Activated CD4-positive, alpha-beta T cell treated with anti-CD3 and anti-CD28 coated beads for 36 hours (primary cell): ENCODE measurements at regions of chr1 and their contacts with region 1.

Region 1: DNA sequence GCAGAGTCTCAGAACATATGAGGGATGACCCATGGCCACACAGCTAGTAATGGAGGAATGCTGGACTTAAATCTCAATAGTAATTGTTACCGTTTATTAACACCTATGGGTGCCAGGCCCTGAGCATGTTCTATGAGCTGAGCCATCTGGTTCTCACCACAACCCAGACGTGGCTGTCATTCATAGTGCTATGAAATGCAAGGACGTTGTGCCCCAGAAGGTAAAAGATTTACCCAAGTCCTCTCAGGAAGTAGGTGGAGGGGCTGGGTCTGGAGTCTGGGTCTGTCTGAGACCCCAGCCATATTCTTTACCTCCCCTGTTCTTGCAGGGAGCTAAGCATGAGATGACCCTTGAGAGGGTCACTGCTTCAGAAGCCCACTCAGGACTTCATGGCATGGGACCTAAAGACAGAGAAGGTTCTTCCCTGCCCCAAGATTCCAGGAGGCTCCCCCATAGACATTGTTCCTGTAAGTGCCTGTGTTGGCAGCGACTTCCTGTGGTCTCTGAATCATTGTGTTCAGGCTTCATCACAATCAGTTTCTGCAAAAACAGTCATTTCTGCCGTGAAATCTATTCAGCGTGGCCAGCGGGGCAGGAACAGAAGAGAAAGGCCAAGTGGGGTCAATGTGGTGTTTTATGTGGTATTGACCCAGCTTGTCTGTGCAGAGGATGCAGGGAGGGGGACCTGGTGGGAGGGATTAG is 475.4 kb downstream of the PTPRU start:
- DNase-seq: peak; percentile 77
- ATAC-seq: peak; percentile 74
- H3K4me3 Mint-ChIP-seq: no peak overlapping the region
- H3K27ac Mint-ChIP-seq: peak overlapping the region; percentile 21
- H3K4me1 Mint-ChIP-seq: peaks cover 38% of the 10 kb centered on the region
- H3K27me3 Mint-ChIP-seq: peaks cover 23% of the 10 kb centered on the region

Region 2: GRCh38 chr1:29688471-29689365 is 23.0 kb before region 1 on chr1:
- CTCF ChIA-PET with region 1: no interaction called
- POLR2A ChIA-PET with region 1: no interaction called
- intact Hi-C with region 1: loop called in 1 of 2 experiments (anchors 1 kb)
- DNase-seq: peak; percentile 70
- ATAC-seq: peak; percentile 96
- H3K4me3 Mint-ChIP-seq: no peak overlapping the region
- H3K27ac Mint-ChIP-seq: peak overlapping the region; percentile 35
- H3K4me1 Mint-ChIP-seq: peaks cover 14% of the 10 kb centered on the region
- H3K27me3 Mint-ChIP-seq: peaks cover 26% of the 10 kb centered on the region

Region 3: DNA sequence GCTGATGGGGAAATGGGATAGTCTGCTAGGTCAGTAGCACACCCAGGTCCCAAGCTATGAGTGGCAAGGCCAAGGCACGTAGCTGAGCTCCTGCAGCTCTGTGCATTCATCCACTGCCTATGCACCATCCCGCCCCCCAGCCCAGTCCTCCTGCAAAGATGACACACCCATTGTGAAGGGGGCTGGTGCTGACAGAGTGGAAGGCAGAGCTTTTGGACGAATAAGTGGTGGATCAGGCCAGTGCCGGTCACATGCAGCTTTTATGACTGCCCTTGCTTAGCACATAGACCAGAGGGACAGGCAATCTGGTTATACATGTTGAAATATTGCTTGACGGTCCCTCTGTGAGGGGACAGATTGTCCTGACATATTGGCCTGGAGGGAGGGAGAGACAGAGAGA is 18.9 kb after region 1 on chr1:
- CTCF ChIA-PET with region 1: no interaction called
- POLR2A ChIA-PET with region 1: no interaction called
- intact Hi-C with region 1: no loop called
- DNase-seq: no peak
- ATAC-seq: no peak
- H3K4me3 Mint-ChIP-seq: no peak overlapping the region
- H3K27ac Mint-ChIP-seq: no peak overlapping the region
- H3K4me1 Mint-ChIP-seq: peaks cover 2% of the 10 kb centered on the region
- H3K27me3 Mint-ChIP-seq: peaks cover 14% of the 10 kb centered on the region

Region 4: DNA sequence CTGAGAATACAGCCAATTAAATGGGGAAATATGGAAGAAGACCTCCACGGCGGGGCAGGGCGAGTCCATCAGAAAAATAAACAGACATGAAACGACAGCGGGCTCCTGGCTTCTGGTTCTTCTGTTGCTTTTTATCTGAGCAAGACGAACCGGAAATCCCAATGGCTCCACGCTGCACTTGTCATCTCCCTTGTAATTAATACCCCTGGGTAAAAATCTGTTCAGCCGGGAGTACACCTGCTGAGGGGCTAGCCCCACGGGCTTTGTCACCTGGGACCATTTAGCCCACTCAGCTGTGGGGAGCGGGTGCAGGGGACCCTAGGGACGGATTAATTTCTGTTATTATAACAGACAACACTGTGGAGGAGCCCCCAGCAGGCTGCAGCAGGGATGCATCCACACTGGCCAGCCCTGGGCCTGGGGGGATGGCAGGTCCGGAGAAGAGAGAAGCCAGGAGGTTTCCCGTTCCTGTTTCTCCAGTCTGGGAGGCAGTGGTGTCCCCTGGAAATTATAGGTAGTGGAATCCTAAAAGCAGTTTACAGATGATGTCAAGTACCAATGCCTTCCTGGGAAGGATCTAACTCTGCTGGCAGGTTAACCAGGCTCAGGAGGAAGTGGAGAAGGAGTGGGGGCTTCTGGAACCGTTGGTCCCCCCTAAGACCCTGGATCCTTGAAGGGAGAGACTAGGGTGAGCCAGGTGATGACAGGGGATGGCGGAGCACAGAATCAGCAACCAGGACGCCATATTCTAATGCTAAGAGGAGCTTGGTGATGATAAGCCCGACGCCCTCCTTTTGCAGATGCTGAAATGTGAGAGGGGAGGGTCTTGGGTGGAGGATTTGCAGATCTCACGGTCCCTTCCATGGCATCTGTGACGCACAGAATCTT is 90.7 kb after region 1 on chr1:
- CTCF ChIA-PET with region 1: no interaction called
- POLR2A ChIA-PET with region 1: no interaction called
- intact Hi-C with region 1: no loop called
- DNase-seq: no peak
- ATAC-seq: no peak
- H3K4me3 Mint-ChIP-seq: no peak overlapping the region
- H3K27ac Mint-ChIP-seq: no peak overlapping the region
- H3K4me1 Mint-ChIP-seq: no peaks in the 10 kb centered on the region
- H3K27me3 Mint-ChIP-seq: peaks cover 3% of the 10 kb centered on the region